ENCODE measurements at regions of chr12 and their contacts with region 1.

Region 1: DNA sequence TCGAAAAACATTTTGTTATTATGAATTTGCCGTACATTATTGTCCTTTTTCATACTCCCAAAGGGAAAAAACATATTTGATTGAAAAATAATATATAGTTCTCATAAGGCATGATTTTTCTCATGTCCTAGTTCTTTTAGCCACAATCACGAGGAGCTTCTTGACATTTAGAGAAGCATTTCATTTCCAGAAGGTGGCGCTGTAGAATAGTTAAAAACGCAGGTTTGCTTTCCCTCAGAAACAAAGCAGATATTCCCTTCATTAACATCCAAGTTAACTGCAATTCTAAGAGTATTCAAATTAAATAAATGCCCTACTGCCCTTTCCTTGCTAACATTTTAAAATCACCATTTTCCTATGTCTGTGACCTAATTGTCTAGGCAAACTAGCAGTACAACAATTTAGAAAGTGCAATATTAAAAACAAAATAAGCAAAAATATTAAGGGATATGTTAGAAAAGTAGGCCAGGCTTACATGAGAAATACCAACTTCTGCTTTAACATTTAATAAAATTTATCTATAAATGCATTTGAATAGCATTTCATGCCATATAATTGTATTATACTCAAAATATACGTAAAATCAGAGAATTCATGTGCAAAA is 10.9 kb upstream of the PIK3C2G start:
- DNase-seq: peak; percentile 73
- H3K4me3 Mint-ChIP-seq: no peak overlapping the region
- H3K27ac Mint-ChIP-seq: no peak overlapping the region
- H3K4me1 Mint-ChIP-seq: no peaks in the 10 kb centered on the region
- H3K27me3 Mint-ChIP-seq: no peaks in the 10 kb centered on the region
- CTCF ChIP-seq: peak; percentile 56

Region 2: GRCh38 chr12:18123707-18124106 is 126.7 kb before region 1 on chr12:
- CTCF ChIA-PET with region 1: no interaction called
- POLR2A ChIA-PET with region 1: no interaction called
- intact Hi-C with region 1: no loop called
- DNase-seq: no peak
- H3K4me3 Mint-ChIP-seq: no peak overlapping the region
- H3K27ac Mint-ChIP-seq: no peak overlapping the region
- H3K4me1 Mint-ChIP-seq: no peaks in the 10 kb centered on the region
- H3K27me3 Mint-ChIP-seq: no peaks in the 10 kb centered on the region
- CTCF ChIP-seq: no peak

Region 3: DNA sequence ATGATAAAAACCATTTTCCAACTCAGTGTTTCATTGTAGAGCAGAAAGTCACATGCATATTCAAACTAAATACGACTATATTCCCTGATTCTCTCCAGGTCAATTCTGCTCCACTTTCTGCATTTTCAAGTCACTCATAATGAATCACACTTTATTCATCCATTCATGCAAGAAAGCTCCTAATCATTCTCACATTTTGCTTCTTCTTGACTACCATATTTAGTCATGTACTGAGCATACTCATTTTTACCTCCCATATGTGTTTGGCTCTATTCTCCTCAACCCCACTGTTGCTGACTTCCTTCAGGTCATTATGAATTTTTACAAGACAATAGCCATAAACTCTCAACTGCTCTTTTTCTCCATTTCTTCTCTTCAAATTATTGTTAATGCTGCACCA is 32.4 kb before region 1 on chr12:
- CTCF ChIA-PET with region 1: no interaction called
- POLR2A ChIA-PET with region 1: no interaction called
- intact Hi-C with region 1: no loop called
- DNase-seq: no peak
- H3K4me3 Mint-ChIP-seq: no peak overlapping the region
- H3K27ac Mint-ChIP-seq: no peak overlapping the region
- H3K4me1 Mint-ChIP-seq: peaks cover 4% of the 10 kb centered on the region
- H3K27me3 Mint-ChIP-seq: no peaks in the 10 kb centered on the region
- CTCF ChIP-seq: no peak

Region 4: DNA sequence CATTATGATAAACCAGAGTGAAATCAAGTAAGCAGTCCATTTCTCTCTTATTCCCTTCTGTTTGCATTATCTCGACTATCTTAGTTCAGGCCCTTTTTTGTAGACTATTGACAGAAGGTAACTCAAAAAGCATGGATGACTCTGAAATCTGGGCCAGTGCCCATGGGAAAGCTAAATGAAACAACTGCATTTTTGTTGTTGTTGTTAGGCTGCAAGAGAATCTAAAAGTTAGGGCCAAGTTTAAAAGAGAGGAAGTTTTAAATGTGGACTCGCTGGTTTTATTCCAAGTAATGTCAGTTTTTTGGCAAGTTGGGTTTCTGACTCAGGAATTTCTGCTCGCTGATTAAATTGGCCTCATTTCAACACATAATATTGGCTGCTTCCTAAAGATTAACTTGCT is 212.0 kb after region 1 on chr12:
- CTCF ChIA-PET with region 1: no interaction called
- POLR2A ChIA-PET with region 1: no interaction called
- intact Hi-C with region 1: no loop called
- DNase-seq: peak; percentile 56
- H3K4me3 Mint-ChIP-seq: peak overlapping the region; percentile 17
- H3K27ac Mint-ChIP-seq: peak overlapping the region; percentile 26
- H3K4me1 Mint-ChIP-seq: peaks cover 19% of the 10 kb centered on the region
- H3K27me3 Mint-ChIP-seq: no peaks in the 10 kb centered on the region
- CTCF ChIP-seq: no peak

Region 5: DNA sequence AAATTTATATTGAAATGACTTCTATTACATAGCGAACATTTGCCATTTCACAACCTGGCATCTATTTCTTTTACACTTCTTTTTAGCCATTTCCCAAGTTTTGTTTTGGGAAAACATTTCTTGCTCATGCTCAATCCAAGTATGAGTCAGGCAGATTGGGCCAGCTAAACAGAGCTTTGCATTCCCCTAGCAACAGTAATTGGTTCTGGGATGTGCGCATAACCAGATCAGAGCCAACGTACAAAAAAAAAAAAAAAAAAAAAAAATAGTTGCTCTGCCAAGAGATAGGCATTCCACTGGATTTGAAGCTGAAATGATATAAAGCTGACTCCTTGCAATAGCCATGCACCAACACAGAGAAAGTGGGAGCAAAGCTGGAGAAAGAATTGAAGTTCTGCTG is 449.9 kb after region 1 on chr12:
- CTCF ChIA-PET with region 1: no interaction called
- POLR2A ChIA-PET with region 1: no interaction called
- intact Hi-C with region 1: loop called (anchors 10 kb)
- DNase-seq: peak; percentile 67
- H3K4me3 Mint-ChIP-seq: no peak overlapping the region
- H3K27ac Mint-ChIP-seq: no peak overlapping the region
- H3K4me1 Mint-ChIP-seq: peaks cover 14% of the 10 kb centered on the region
- H3K27me3 Mint-ChIP-seq: no peaks in the 10 kb centered on the region
- CTCF ChIP-seq: no peak

Region 6: GRCh38 chr12:18861287-18861858 is 611.0 kb after region 1 on chr12:
- CTCF ChIA-PET with region 1: no interaction called
- POLR2A ChIA-PET with region 1: interaction called, 3 read pairs
- intact Hi-C with region 1: loop called (anchors 5 kb)
- DNase-seq: peak; percentile 64
- H3K4me3 Mint-ChIP-seq: no peak overlapping the region
- H3K27ac Mint-ChIP-seq: no peak overlapping the region
- H3K4me1 Mint-ChIP-seq: peaks cover 15% of the 10 kb centered on the region
- H3K27me3 Mint-ChIP-seq: no peaks in the 10 kb centered on the region
- CTCF ChIP-seq: peak; percentile 78

Measured in MCF 10A (cell line).